Dendritic cell treated with granulocyte-macrophage colony-stimulating factor and Interleukin-4, amounts not matched to agents 40 ng/mL and 50 ng/mL, for 4 days (primary cell): ENCODE measurements at regions of chr11 and their contacts with region 1.

Region 1: DNA sequence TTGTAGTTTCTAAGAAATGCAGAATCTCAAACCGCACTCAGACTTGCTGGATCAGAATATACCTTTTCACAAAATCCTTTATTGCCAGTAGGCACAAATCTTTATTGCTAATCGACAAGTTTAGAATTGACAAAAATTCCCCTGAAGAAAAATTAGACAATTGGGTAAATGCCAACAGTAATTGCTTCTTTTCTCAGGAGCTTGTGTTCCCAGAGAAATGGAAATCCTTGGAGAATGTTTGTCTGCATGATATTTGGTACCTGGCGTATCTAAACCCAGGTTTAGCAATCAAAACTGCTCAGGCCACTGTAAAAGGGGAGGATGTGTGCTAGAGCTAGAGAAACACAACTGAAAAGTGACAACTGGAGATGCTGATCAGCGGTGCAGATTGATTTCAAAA is at the start of gene OR8G5:
- H3K4me3 Mint-ChIP-seq: no peak within 1 kb of the TSS
- H3K27ac Mint-ChIP-seq: no peak within 1 kb of the TSS
- H3K4me1 Mint-ChIP-seq: peaks cover 15% of the 10 kb centered on the region
- H3K27me3 Mint-ChIP-seq: no peaks in the 10 kb centered on the region

Region 2: DNA sequence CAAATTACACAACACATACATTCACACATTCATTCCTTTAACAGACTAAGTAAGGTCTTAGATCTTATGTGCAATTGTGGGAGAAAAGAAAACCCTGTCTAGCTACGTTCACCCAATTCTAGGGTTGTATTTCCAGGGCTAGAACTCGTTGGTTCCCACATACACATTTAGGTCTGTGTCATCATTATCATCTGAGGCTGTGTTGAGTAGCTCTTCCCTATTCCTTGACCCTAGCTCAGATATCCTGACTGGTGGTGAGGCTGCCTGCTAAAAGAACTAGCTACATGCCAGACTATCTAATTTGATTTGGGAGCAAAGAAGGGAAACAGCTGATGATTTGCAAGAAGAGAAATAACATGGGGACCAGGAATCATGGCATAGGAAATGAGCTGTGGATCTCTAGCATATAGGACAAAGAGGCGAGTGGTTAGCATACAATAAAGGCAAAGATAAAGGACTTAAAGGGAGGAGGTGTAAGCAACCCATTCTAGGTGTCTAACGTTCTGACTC is 187.4 kb before region 1 on chr11:
- intact Hi-C with region 1: no loop called
- H3K4me3 Mint-ChIP-seq: no peak overlapping the region
- H3K27ac Mint-ChIP-seq: no peak overlapping the region
- H3K4me1 Mint-ChIP-seq: peaks cover 31% of the 10 kb centered on the region
- H3K27me3 Mint-ChIP-seq: peaks cover 20% of the 10 kb centered on the region

Region 3: DNA sequence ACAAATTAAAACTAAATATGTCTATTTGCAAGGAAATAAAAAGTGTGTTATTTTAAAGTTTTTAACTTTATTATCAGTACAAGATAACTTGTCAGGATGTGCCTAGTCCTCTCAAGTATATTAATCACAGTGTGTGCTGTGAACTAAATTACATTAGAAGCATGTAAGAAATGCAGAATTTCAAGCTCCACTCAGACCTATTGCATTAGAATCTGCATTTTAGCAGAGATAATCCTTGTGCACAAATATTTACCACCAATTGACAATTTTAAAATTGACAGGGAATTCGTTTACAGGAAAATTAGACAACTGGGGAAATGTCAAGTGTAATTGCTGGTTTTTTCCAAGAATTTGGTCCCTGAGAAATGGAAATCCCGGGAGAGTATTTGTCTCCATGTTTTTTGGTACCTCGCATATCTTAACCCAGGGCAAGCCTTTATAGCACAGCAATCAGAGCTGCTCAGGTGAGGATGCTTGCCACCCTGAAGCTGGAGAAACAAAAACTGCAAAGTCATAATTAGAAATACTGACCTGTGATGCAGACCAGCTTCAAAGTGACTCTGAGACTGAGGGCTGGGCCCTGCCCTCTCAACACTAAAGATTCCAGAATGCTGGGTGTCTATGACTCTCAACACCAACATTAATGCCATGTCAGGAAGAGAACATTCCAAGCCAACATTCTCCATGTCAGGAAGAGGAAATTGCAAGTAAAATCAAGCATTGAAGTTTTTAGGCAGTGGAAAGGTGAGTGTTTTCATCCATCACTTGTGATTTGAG is 15.3 kb before region 1 on chr11 and contains the start of gene OR8G1:
- intact Hi-C with region 1: loop called (anchors 1 kb)
- H3K4me3 Mint-ChIP-seq: no peak within 1 kb of the TSS
- H3K27ac Mint-ChIP-seq: no peak within 1 kb of the TSS
- H3K4me1 Mint-ChIP-seq: peaks cover 9% of the 10 kb centered on the region
- H3K27me3 Mint-ChIP-seq: peaks cover 3% of the 10 kb centered on the region

Region 4: DNA sequence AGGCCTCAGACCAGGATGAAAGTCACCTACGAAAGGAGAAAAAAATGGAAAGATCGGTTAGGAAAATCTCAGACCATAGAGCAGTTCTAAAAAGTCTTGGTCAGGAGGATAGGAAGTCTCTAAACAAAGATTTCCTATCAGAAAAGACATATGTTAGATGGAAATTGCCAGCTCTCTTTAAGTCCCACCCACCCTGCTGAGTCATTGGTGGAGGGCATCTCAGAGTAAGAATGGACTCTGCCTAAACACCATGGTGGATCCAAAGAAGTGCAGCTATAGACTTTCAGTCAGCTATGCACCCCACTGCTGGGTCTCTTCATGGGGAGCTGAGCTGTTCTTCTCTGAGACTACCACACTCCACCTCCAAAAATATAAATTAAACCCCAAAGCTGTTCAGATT is 124.5 kb after region 1 on chr11:
- intact Hi-C with region 1: no loop called
- H3K4me3 Mint-ChIP-seq: no peak overlapping the region
- H3K27ac Mint-ChIP-seq: no peak overlapping the region
- H3K4me1 Mint-ChIP-seq: no peaks in the 10 kb centered on the region
- H3K27me3 Mint-ChIP-seq: no peaks in the 10 kb centered on the region